Breast epithelium (tissue), 4 donors: ENCODE measurements at regions of chr2 and their contacts with region 1.

Region 1: GRCh38 chr2:120491111-120491625 is 145.2 kb downstream of the INHBB start:
- DNase-seq: no peak
- H3K4me3 ChIP-seq: no peak overlapping the region
- H3K27ac ChIP-seq: no peak overlapping the region
- H3K4me1 ChIP-seq: no peaks in the 10 kb centered on the region
- H3K27me3 ChIP-seq: no peaks in the 10 kb centered on the region
- CTCF ChIP-seq: no peak
- POLR2A ChIP-seq: no peak

Region 2: DNA sequence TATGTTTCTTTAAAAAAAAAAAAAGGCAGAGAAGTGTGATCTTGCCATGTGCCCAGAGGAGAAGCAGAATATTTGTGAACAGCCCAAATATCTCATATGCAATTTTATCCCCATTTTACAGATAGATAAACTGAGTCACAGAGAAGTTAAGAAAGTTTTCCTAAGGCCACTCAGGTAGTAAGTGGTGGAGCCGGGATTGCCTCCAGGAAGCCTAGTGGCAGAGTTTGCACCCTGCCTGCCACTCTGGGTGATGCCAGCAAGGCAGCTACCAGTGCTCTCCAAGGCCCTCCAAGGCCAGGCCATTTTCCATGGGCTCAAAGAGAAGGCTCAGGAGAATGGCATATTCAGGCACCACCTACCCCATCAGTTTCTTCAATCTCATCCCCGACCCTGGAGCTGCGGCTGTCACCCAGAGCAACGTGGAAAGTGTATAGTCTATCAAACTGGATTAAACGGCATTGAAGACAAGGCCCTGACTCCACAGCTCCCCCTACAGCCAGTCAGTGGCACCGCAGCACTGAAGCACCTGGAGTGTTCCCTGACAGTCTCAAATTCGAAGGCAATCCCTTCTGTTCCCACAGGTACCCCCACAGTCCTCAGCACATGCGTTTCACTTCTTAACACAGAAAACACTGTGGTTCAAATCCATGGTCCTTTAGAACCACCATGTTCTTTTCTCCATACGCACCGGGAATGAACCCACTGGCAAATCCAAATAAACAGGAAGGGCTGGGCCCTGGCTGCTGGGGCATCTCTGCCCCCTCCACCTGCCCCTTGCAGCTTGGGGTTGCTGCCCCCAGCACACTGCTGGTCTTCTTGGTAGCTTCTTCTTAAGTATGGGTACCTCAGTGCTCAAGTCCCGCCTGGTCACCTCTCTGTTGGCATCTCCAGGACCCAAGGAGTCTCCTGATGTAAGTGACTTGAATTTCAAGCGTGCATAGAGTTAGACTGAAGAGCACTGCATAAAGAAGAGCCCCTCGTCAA is 30.1 kb after region 1 on chr2:
- intact Hi-C with region 1: loop called (anchors 1 kb)
- DNase-seq: peak; percentile 40 to 74
- H3K4me3 ChIP-seq: no peak overlapping the region
- H3K27ac ChIP-seq: no peak overlapping the region
- H3K4me1 ChIP-seq: no peaks in the 10 kb centered on the region
- H3K27me3 ChIP-seq: no peaks in the 10 kb centered on the region
- CTCF ChIP-seq: peak; percentile 36 to 80 (median 69)
- POLR2A ChIP-seq: no peak

Region 3: GRCh38 chr2:120803764-120804335 is 312.7 kb after region 1 on chr2:
- intact Hi-C with region 1: no loop called
- DNase-seq: no peak
- H3K4me3 ChIP-seq: no peak overlapping the region
- H3K27ac ChIP-seq: no peak overlapping the region
- H3K4me1 ChIP-seq: no peaks in the 10 kb centered on the region
- H3K27me3 ChIP-seq: no peaks in the 10 kb centered on the region
- CTCF ChIP-seq: no peak
- POLR2A ChIP-seq: no peak